Activated B cell treated with CpG ODN at 0.5 μM for 24 hours (primary cell): ENCODE measurements at regions of chr6 and their contacts with region 1.

Region 1: GRCh38 chr6:99416892-99417767 is 8.0 kb downstream of the PNISR start:
- DNase-seq: no peak
- ATAC-seq: peak; percentile 80
- H3K4me3 Mint-ChIP-seq: peak overlapping the region; percentile 20
- H3K27ac Mint-ChIP-seq: peak overlapping the region; percentile 81
- H3K4me1 Mint-ChIP-seq: peaks cover 53% of the 10 kb centered on the region
- H3K27me3 Mint-ChIP-seq: no peaks in the 10 kb centered on the region
- CTCF ChIP-seq: no peak

Region 2: GRCh38 chr6:99232056-99232455 is 185.1 kb before region 1 on chr6:
- CTCF ChIA-PET with region 1: no interaction called
- POLR2A ChIA-PET with region 1: no interaction called
- intact Hi-C with region 1: no loop called
- DNase-seq: no peak
- ATAC-seq: no peak
- H3K4me3 Mint-ChIP-seq: no peak overlapping the region
- H3K27ac Mint-ChIP-seq: no peak overlapping the region
- H3K4me1 Mint-ChIP-seq: no peaks in the 10 kb centered on the region
- H3K27me3 Mint-ChIP-seq: peaks cover 15% of the 10 kb centered on the region
- CTCF ChIP-seq: no peak

Region 3: GRCh38 chr6:99402448-99402847 is 14.7 kb before region 1 on chr6:
- CTCF ChIA-PET with region 1: no interaction called
- POLR2A ChIA-PET with region 1: no interaction called
- intact Hi-C with region 1: loop called (anchors 2 kb)
- DNase-seq: no peak
- ATAC-seq: no peak
- H3K4me3 Mint-ChIP-seq: no peak overlapping the region
- H3K27ac Mint-ChIP-seq: no peak overlapping the region
- H3K4me1 Mint-ChIP-seq: no peaks in the 10 kb centered on the region
- H3K27me3 Mint-ChIP-seq: no peaks in the 10 kb centered on the region
- CTCF ChIP-seq: no peak

Region 4: DNA sequence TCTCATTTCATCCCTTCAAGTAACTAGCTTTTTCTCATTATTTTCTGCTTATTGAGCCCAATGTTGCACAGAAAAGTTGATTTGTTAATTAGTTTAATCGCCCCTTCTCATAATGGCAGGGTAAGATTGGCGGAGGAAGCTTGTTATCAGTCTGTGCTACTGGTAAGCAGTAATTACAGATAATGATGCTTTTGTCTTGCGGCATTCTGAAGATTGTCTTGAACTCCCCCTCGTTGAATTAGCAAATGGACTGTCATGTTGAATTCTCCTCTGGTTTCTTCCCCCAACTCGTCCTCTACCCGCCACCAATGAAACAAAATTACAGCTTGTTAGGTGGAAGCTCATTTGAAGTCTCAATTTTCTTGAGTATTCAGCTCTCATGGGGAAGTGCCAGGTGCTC is 228.9 kb after region 1 on chr6:
- CTCF ChIA-PET with region 1: no interaction called
- POLR2A ChIA-PET with region 1: no interaction called
- intact Hi-C with region 1: no loop called
- DNase-seq: no peak
- ATAC-seq: no peak
- H3K4me3 Mint-ChIP-seq: no peak overlapping the region
- H3K27ac Mint-ChIP-seq: no peak overlapping the region
- H3K4me1 Mint-ChIP-seq: no peaks in the 10 kb centered on the region
- H3K27me3 Mint-ChIP-seq: peaks cover 11% of the 10 kb centered on the region
- CTCF ChIP-seq: no peak